Calu3 (cell line): ENCODE measurements at regions of chr7 and their contacts with region 1.

Region 1: DNA sequence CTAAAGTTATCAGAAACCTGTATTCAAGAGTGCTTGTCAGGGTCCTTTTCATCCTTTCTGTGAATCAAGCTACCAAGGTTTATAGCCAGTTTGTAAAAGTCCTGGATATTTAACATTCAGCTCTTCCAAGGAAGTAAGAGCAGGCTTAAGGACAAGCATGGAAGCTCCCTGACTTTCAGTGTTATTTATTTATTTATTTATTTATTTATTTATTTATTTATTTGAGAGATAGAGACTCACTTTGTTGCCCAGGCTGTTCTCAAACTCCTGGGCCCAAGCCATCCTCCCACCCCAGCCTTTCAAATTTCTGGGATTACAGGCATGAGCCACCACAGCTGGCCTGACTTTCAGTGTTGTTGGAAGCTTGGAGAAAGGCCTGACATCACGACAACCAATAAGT is 44.4 kb upstream of the RELN start:
- DNase-seq: no peak
- H3K4me3 Mint-ChIP-seq: no peak overlapping the region
- H3K27ac Mint-ChIP-seq: no peak overlapping the region
- H3K4me1 Mint-ChIP-seq: no peaks in the 10 kb centered on the region
- H3K27me3 Mint-ChIP-seq: no peaks in the 10 kb centered on the region
- CTCF ChIP-seq: no peak

Region 2: GRCh38 chr7:105156731-105157130 is 1122.9 kb after region 1 on chr7:
- CTCF ChIA-PET with region 1: interaction called, 10 read pairs
- intact Hi-C with region 1: no loop called
- DNase-seq: no peak
- H3K4me3 Mint-ChIP-seq: no peak overlapping the region
- H3K27ac Mint-ChIP-seq: no peak overlapping the region
- H3K4me1 Mint-ChIP-seq: no peaks in the 10 kb centered on the region
- H3K27me3 Mint-ChIP-seq: no peaks in the 10 kb centered on the region
- CTCF ChIP-seq: no peak